ENCODE measurements at regions of chr2 and their contacts with region 1.

Region 1: GRCh38 chr2:130878316-130878715 is 41.6 kb downstream of the ARHGEF4 start:
- DNase-seq: no peak
- ATAC-seq: no peak
- H3K4me3 ChIP-seq: no peak overlapping the region
- H3K27ac ChIP-seq: no peak overlapping the region
- H3K4me1 ChIP-seq: no peaks in the 10 kb centered on the region
- H3K27me3 ChIP-seq: no peaks in the 10 kb centered on the region
- CTCF ChIP-seq: no peak
- POLR2A ChIP-seq: no peak

Region 2: GRCh38 chr2:130797493-130798435 is 80.6 kb before region 1 on chr2:
- intact Hi-C with region 1: loop called (anchors 5 kb)
- DNase-seq: peak; percentile 88 to 92 (median 90)
- ATAC-seq: peak; percentile 93
- H3K4me3 ChIP-seq: peak overlapping the region; percentile 60
- H3K27ac ChIP-seq: peak overlapping the region; percentile 74 to 85 (median 84)
- H3K4me1 ChIP-seq: peaks cover 15% of the 10 kb centered on the region
- H3K27me3 ChIP-seq: no peaks in the 10 kb centered on the region
- CTCF ChIP-seq: peak; percentile 83 to 99 (median 86)
- POLR2A ChIP-seq: peak; percentile 35 to 70 (median 64)

Region 3: GRCh38 chr2:131445896-131446295 is 567.6 kb after region 1 on chr2:
- intact Hi-C with region 1: no loop called
- DNase-seq: no peak
- ATAC-seq: no peak
- H3K4me3 ChIP-seq: no peak overlapping the region
- H3K27ac ChIP-seq: no peak overlapping the region
- H3K4me1 ChIP-seq: no peaks in the 10 kb centered on the region
- H3K27me3 ChIP-seq: no peaks in the 10 kb centered on the region
- CTCF ChIP-seq: no peak
- POLR2A ChIP-seq: no peak

Measured in body of pancreas (tissue), 4 donors.